ENCODE measurements at regions of chr17 and their contacts with region 1.

Region 1: DNA sequence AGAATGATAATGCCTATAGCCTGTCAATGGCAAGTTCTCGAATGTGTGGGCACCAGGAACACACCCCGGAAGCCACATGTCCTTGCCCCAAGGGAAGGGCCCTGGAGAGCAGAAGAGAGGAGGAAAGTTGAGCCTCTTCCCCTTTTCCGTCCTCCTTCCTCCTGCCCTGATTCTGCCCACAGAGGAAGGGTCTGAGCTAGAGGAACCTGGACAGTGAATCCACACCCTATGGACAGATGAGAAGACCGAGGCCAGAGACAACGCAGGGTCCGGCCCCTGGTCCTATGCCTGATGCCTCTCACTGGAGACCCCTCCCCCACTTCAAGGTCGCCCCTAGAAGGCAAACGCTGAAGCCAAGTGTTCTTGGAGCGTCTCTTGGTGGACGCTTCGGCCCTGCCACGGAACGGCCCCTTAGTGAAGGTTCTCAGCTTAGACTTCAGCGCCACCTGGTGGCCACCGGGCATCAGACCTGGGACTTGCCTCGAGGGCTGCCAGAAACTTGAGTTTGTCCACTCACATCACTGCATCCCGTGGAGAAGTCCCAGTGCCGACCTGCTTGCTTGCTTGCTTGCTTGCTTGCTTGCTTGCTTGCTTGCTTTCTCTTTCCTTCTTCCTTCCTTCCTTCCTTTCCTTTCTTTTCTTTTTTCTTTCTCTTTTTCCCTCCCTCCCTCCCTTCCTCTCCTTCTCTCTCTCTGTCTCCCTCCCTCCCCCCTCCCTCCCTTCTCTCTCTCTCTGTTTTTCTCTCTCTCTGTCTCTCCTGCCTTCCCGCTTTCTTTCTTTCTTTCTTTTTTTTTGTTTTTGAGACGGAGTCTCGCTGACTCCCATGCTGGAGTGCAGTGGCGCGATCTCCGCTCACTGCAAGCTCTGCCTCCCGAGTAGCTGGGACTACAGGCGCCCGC is 20.6 kb upstream of the SPNS3 start:
- DNase-seq: peak; percentile 71
- H3K4me3 ChIP-seq: no peak overlapping the region
- H3K27ac ChIP-seq: no peak overlapping the region
- H3K4me1 ChIP-seq: peaks cover 6% of the 10 kb centered on the region
- H3K27me3 ChIP-seq: no peaks in the 10 kb centered on the region
- CTCF ChIP-seq: peak; percentile 91 to 92

Region 2: GRCh38 chr17:3859940-3860339 is 553.2 kb before region 1 on chr17:
- CTCF ChIA-PET with region 1: no interaction called
- dilution Hi-C with region 1: no loop called
- in situ Hi-C with region 1: no loop called
- intact Hi-C with region 1: loop called (anchors 2 kb)
- DNase-seq: no peak
- H3K4me3 ChIP-seq: no peak overlapping the region
- H3K27ac ChIP-seq: no peak overlapping the region
- H3K4me1 ChIP-seq: no peaks in the 10 kb centered on the region
- H3K27me3 ChIP-seq: no peaks in the 10 kb centered on the region
- CTCF ChIP-seq: no peak

Region 3: DNA sequence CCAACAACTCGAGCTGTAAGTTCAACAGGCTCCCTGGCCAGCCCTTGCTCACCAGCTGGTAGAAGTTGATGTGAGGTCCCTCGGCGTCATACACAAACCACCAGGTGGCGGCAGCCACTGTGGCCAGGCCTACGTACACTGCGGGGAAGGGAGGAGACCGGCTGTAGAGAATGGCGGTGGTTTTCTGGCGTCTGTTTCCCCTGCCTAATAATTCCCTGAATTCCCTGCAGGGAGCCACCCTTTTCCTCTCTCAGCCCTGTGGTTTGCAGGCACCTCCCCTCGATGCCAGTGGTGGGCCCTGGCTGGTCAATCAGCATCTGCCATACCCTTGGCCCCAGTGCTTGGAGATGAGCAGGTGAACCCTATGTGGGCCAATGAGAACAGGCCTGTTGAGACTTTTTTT is 478.0 kb before region 1 on chr17:
- CTCF ChIA-PET with region 1: no interaction called
- dilution Hi-C with region 1: no loop called
- in situ Hi-C with region 1: no loop called
- intact Hi-C with region 1: loop called (anchors 1 kb)
- DNase-seq: peak; percentile 32
- H3K4me3 ChIP-seq: no peak overlapping the region
- H3K27ac ChIP-seq: no peak overlapping the region
- H3K4me1 ChIP-seq: no peaks in the 10 kb centered on the region
- H3K27me3 ChIP-seq: no peaks in the 10 kb centered on the region
- CTCF ChIP-seq: peak; percentile 24 to 65

Region 4: GRCh38 chr17:4220655-4221054 is 192.5 kb before region 1 on chr17:
- CTCF ChIA-PET with region 1: no interaction called
- dilution Hi-C with region 1: no loop called
- in situ Hi-C with region 1: loop called in 1 of 2 experiments (anchors 10 kb)
- intact Hi-C with region 1: loop called (anchors 1 kb)
- DNase-seq: no peak
- H3K4me3 ChIP-seq: no peak overlapping the region
- H3K27ac ChIP-seq: no peak overlapping the region
- H3K4me1 ChIP-seq: peaks cover 14% of the 10 kb centered on the region
- H3K27me3 ChIP-seq: no peaks in the 10 kb centered on the region
- CTCF ChIP-seq: no peak

Region 5: DNA sequence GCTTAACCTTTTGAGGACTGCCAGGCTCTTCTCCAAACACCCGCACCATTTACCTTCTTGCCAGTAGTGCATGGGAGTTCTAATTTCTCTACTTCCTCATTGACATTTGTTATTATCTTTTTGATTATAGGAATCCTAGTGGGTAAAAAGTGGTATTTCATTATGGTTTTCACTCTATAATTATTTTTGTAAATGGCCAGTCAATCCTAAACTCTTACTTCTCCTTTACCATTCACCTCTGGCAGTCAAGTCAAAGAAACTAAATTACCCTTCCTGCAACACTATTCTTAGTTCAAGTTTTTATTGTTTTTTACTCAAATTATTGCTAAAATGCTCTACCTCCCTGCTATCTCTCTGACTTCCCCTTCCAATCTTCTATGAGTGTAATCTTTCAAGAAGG is 119.6 kb before region 1 on chr17:
- CTCF ChIA-PET with region 1: no interaction called
- dilution Hi-C with region 1: no loop called
- in situ Hi-C with region 1: no loop called
- intact Hi-C with region 1: no loop called
- DNase-seq: no peak
- H3K4me3 ChIP-seq: no peak overlapping the region
- H3K27ac ChIP-seq: no peak overlapping the region
- H3K4me1 ChIP-seq: peaks cover 6% of the 10 kb centered on the region
- H3K27me3 ChIP-seq: no peaks in the 10 kb centered on the region
- CTCF ChIP-seq: no peak

Region 6: DNA sequence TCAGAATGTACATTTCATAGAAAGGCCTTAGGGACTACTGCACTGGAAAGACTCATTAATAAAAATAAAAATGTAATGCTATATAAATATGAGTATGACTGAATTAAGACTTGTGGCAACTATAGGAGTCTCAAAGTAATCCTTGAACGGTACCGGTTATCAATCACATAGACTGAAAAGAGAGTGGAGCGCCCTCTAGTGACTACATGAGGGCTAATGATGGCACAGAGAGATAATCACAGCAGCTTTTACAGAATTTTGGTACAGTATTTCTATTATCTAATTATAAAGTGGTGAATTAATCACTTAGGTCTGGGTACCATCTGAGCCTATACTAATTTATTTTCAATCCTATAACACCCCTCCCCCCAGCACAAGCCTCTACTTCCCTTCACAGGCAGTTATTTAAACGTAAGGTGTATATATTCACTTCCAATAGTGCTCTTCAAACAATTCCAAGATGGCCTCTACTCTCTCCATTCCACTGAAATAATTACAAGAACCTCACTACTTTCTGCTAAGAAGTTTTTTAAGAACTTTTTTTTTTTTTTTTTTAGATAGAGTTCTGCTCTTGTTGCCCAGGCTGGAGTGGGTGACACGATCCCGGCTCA is 108.7 kb before region 1 on chr17:
- CTCF ChIA-PET with region 1: no interaction called
- dilution Hi-C with region 1: no loop called
- in situ Hi-C with region 1: no loop called
- intact Hi-C with region 1: loop called (anchors 2 kb)
- DNase-seq: peak; percentile 35
- H3K4me3 ChIP-seq: no peak overlapping the region
- H3K27ac ChIP-seq: no peak overlapping the region
- H3K4me1 ChIP-seq: no peaks in the 10 kb centered on the region
- H3K27me3 ChIP-seq: no peaks in the 10 kb centered on the region
- CTCF ChIP-seq: peak; percentile 69 to 73

Region 7: DNA sequence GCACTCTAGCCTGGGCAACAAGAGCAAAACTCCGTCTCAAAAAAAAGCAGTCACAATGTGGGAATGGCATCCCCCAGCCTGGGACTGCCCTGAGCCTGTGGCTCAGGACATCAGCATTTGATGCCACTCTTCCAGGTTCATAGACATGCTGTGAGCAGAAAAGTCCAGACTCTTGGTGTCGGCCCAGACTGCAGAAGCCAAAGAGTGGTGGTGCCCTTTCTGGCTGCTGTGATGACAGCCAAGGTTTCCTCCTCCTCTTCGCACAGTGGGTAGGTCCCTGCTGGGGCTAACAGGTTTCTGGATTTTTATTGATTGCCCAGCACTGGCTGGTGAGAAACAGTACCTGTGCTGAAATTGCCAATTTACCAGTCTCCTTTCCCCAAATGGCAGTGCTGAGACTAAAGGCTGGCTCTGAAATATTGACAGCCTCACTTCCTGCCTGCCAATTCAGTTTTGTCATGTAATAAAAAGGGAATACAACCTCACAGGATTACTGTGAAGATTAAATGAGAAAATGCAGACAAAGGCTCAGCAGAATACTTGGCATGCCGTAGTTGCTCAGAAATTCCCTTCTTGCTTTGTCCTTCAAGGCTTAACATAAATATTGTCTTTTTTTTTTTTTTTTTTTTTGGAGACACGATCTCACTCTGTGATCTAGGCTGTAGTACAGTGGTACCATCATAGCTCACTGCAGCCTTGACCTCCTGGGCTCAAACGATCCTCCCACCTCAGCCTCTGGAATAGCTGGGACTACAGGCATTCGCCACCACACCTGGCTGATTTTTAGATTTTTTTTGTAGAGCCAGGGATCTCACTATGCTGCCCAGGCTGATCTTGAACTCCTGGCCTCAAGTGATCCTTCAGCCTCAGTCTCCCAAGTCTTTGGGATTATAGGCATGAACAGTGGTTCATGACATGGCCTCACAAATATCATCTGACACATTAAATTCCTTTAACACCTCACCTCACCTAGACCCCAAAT is 31.2 kb before region 1 on chr17:
- CTCF ChIA-PET with region 1: no interaction called
- dilution Hi-C with region 1: no loop called
- in situ Hi-C with region 1: no loop called
- intact Hi-C with region 1: no loop called
- DNase-seq: no peak
- H3K4me3 ChIP-seq: no peak overlapping the region
- H3K27ac ChIP-seq: no peak overlapping the region
- H3K4me1 ChIP-seq: no peaks in the 10 kb centered on the region
- H3K27me3 ChIP-seq: no peaks in the 10 kb centered on the region
- CTCF ChIP-seq: no peak

Measured in mammary epithelial cell (primary cell).